Sigmoid colon (tissue), 7 donors: ENCODE measurements at regions of chr6 and their contacts with region 1.

Region 1: DNA sequence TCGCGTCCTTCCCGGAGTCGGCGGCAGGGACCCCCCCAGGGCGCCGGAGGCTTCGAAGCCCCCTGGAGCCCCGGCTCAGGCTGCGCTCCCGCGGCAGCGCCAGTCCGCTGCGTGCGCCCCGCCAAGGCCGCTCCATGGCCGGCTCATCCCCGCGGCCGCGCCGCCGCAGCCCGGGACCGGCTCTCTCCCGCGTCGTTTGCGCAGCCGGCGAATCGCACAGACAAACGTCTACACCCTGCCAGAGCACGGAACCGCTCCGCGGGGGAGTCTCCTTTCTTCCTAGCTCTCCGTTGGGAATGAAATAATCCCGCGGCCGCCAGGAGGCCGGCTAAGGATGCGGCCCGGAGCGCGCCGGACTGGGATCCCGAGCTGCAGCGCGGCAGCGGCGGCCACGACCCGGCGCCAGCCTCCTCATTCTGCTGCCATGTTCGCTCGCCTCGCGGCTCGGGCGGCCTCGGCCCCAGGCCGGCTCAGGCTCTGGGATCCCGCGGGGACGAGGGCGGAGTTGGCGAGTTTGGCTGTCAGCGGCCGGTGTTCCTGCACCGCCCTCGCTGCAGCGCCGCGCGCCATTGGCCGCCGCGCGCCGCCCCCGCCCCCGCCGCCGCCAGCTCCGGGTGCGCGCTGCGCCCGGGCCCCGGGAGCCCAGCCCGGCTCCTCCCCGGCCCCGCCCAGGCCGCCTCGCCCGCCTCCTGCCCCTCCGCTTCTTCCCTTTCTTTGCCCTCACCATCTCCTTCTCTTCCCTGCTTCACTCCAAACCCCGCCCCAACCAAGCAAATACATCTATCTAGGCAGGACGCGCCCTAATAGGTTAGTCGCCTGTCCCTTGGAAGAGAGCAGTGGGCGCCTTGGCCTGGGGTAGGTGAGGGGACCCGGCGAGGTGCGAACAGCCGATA is at the start of gene GFOD1:
- DNase-seq: peak; percentile 93
- H3K4me3 ChIP-seq: peak within 1 kb of the TSS; percentile 63 to 98 (median 86)
- H3K27ac ChIP-seq: peak within 1 kb of the TSS; percentile 91 to 98 (median 96)
- H3K4me1 ChIP-seq: peaks cover 0 to 49% (median 23%) of the 10 kb centered on the region in 4 donors
- H3K27me3 ChIP-seq: no peaks in the 10 kb centered on the region
- CTCF ChIP-seq: peak in 1 of 4 experiments; percentile 18
- EP300 ChIP-seq: no peak
- POLR2A ChIP-seq: peak; percentile 41 to 66
- total RNA-seq, gene GFOD1: 13.3 to 18.3 (median 15.7) TPM

Region 2: GRCh38 chr6:13328076-13328874 is 159.1 kb before region 1 on chr6 and contains the start of gene TBC1D7:
- intact Hi-C with region 1: loop called (anchors 2 kb)
- DNase-seq: peak; percentile 97
- H3K4me3 ChIP-seq: peak within 1 kb of the TSS; percentile 57 to 89 (median 80)
- H3K27ac ChIP-seq: peak within 1 kb of the TSS; percentile 83 to 94 (median 94)
- H3K4me1 ChIP-seq: peaks cover 0 to 16% (median 7%) of the 10 kb centered on the region in 4 donors
- H3K27me3 ChIP-seq: no peaks in the 10 kb centered on the region
- CTCF ChIP-seq: peak in 2 of 4 experiments; percentile 19 to 25
- EP300 ChIP-seq: no peak
- POLR2A ChIP-seq: peak; percentile 59 to 74
- total RNA-seq, gene TBC1D7: 7.2 to 13.8 (median 11.2) TPM

Region 3: GRCh38 chr6:13336553-13336952 is 150.8 kb before region 1 on chr6:
- intact Hi-C with region 1: loop called (anchors 2 kb)
- DNase-seq: peak; percentile 84
- H3K4me3 ChIP-seq: no peak overlapping the region
- H3K27ac ChIP-seq: peak overlapping the region in 2 of 4 donors; percentile 26 to 31
- H3K4me1 ChIP-seq: peaks cover 0 to 6% (median 2%) of the 10 kb centered on the region in 4 donors
- H3K27me3 ChIP-seq: no peaks in the 10 kb centered on the region
- CTCF ChIP-seq: peak; percentile 53 to 97 (median 91)
- EP300 ChIP-seq: no peak
- POLR2A ChIP-seq: no peak

Region 4: GRCh38 chr6:13383328-13384163 is 103.8 kb before region 1 on chr6:
- intact Hi-C with region 1: loop called (anchors 5 kb)
- DNase-seq: no peak
- H3K4me3 ChIP-seq: no peak overlapping the region
- H3K27ac ChIP-seq: peak overlapping the region; percentile 34 to 68 (median 50)
- H3K4me1 ChIP-seq: peaks cover 0 to 34% (median 15%) of the 10 kb centered on the region in 4 donors
- H3K27me3 ChIP-seq: no peaks in the 10 kb centered on the region
- CTCF ChIP-seq: peak in 2 of 4 experiments; percentile 21 to 25
- EP300 ChIP-seq: no peak
- POLR2A ChIP-seq: no peak

Region 5: GRCh38 chr6:13427801-13428582 is 59.4 kb before region 1 on chr6:
- intact Hi-C with region 1: loop called (anchors 5 kb)
- DNase-seq: no peak
- H3K4me3 ChIP-seq: no peak overlapping the region
- H3K27ac ChIP-seq: peak overlapping the region in 3 of 4 donors; percentile 3 to 48 (median 34)
- H3K4me1 ChIP-seq: peaks cover 0 to 45% (median 25%) of the 10 kb centered on the region in 4 donors
- H3K27me3 ChIP-seq: no peaks in the 10 kb centered on the region
- CTCF ChIP-seq: no peak
- EP300 ChIP-seq: no peak
- POLR2A ChIP-seq: no peak

Region 6: DNA sequence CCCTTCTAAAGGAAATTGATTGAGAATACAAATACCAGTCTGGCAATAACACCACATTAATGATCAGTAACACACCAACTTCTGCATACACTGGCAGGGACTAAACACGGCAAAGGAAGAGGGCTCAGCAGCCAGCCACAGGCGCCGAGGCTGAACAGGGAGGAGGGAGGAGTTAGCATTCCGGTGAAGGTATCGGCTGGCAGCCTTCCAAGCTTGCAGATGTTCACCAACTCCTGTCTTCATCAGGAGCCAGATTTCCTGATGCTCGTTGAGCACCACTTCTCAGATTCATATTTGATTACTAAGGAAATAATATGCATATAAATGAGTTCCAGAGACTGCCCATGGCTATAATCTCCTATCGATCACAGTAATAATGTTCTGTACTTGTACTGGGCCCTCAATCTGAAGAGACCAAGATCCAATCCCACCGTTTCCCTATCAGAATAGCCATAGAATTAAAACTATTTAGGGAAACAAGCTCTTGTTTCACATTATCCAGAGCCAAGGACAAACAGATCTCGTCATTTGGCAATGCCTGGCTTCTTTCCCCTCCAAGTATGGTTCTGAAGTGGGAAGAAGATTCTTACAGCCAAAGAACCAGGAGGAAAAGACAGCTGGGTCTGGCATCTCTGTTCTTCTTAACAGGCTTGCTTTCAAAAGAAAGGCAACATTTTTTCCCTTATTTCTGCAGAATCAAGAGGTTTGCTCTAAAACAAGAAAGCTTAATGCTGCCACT is 42.2 kb before region 1 on chr6:
- intact Hi-C with region 1: loop called (anchors 5 kb)
- DNase-seq: peak; percentile 91
- H3K4me3 ChIP-seq: peak overlapping the region in 3 of 4 donors; percentile 13 to 26 (median 24)
- H3K27ac ChIP-seq: peak overlapping the region; percentile 73 to 87 (median 79)
- H3K4me1 ChIP-seq: peaks cover 0 to 73% (median 66%) of the 10 kb centered on the region in 4 donors
- H3K27me3 ChIP-seq: no peaks in the 10 kb centered on the region
- CTCF ChIP-seq: no peak
- EP300 ChIP-seq: peak in 1 of 4 donors; percentile 66
- POLR2A ChIP-seq: no peak

Region 7: GRCh38 chr6:13574149-13574570 is 86.8 kb after region 1 on chr6:
- intact Hi-C with region 1: loop called (anchors 1 kb)
- DNase-seq: peak; percentile 95
- H3K4me3 ChIP-seq: peak overlapping the region; percentile 61 to 97 (median 87)
- H3K27ac ChIP-seq: peak overlapping the region; percentile 88 to 99 (median 98)
- H3K4me1 ChIP-seq: peaks cover 0 to 18% (median 8%) of the 10 kb centered on the region in 4 donors
- H3K27me3 ChIP-seq: no peaks in the 10 kb centered on the region
- CTCF ChIP-seq: peak in 1 of 4 experiments; percentile 45
- EP300 ChIP-seq: no peak
- POLR2A ChIP-seq: no peak